ENCODE measurements at regions of chr3 and their contacts with region 1.

Region 1: GRCh38 chr3:166405465-166405864 is 568.2 kb upstream of the BCHE start:
- DNase-seq: no peak
- H3K4me3 ChIP-seq: no peak overlapping the region
- H3K27ac ChIP-seq: no peak overlapping the region
- H3K4me1 ChIP-seq: no peaks in the 10 kb centered on the region
- H3K27me3 ChIP-seq: no peaks in the 10 kb centered on the region
- CTCF ChIP-seq: no peak

Region 2: GRCh38 chr3:166362698-166363097 is 42.8 kb before region 1 on chr3:
- CTCF ChIA-PET with region 1: no interaction called
- dilution Hi-C with region 1: loop called (anchors 5 kb)
- in situ Hi-C with region 1: no loop called
- intact Hi-C with region 1: no loop called
- DNase-seq: peak; percentile 25
- H3K4me3 ChIP-seq: no peak overlapping the region
- H3K27ac ChIP-seq: no peak overlapping the region
- H3K4me1 ChIP-seq: no peaks in the 10 kb centered on the region
- H3K27me3 ChIP-seq: no peaks in the 10 kb centered on the region
- CTCF ChIP-seq: no peak